CD8-positive, alpha-beta memory T cell (primary cell): ENCODE measurements at regions of chr4 and their contacts with region 1.

Region 1: DNA sequence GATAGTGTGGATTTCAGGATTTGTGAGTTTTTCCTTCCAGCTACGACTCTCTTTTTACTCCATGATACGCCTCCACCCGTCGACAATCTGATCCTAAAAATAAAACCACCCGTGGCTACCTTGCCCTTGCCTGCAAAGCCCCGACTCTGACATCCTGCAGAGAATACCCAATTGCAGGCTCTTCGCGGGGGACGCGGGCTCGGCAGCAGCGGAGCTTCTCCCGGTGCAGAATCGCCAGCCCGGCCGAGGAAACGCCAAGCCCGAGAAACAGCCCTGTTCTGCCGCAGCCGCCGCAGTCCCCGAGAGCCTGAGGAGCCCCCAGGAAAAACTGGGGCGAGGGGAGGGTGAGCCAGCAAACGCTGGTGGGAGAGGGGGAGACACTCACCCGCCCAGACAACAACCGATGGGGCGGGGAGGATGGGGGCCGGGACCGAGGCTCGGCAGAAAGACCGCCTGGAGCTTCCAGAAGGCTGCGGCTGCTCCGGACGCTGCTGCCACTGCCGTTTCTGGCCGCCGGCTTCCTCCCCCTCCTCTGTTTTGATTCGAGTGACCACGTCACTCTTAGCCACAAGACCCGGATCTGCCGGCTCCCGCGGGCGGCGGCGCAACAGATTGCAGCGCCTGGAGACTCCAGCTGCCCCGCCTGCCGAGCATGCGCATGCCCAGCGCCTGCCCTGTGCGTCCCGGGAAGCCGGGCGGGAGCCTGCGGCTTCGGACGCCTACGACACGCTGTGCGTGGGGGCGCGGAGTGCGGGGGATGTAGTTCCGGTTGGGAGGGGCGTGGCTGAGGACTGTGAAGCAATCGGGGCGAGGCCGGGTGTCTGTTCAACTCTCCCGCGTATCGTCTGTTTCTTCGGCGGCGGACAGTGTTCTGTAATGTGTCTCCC is at the start of gene SMIM14:
- DNase-seq: peak; percentile 83 to 91 (median 89)
- H3K4me3 ChIP-seq: peak within 1 kb of the TSS; percentile 86
- H3K4me3 Mint-ChIP-seq: peak within 1 kb of the TSS; percentile 84 to 97 (median 93)
- H3K27ac ChIP-seq: peak within 1 kb of the TSS; percentile 74
- H3K27ac Mint-ChIP-seq: peak within 1 kb of the TSS; percentile 88 to 98 (median 96)
- H3K4me1 ChIP-seq: peaks cover 18% of the 10 kb centered on the region
- H3K4me1 Mint-ChIP-seq: peaks cover 42 to 49% (median 49%) of the 10 kb centered on the region in 3 donors
- H3K27me3 ChIP-seq: no peaks in the 10 kb centered on the region
- H3K27me3 Mint-ChIP-seq: no peaks in the 10 kb centered on the region
- total RNA-seq, gene SMIM14: 2.2 TPM

Region 2: GRCh38 chr4:39469429-39470077 is 169.0 kb before region 1 on chr4:
- CTCF ChIA-PET with region 1: interaction called, 13 read pairs
- POLR2A ChIA-PET with region 1: no interaction called
- DNase-seq: peak in 3 of 5 donors; percentile 11 to 46 (median 44)
- H3K4me3 ChIP-seq: no peak overlapping the region
- H3K4me3 Mint-ChIP-seq: no peak overlapping the region
- H3K27ac ChIP-seq: no peak overlapping the region
- H3K27ac Mint-ChIP-seq: peak overlapping the region in 6 of 8 donors; percentile 10 to 42 (median 16)
- H3K4me1 ChIP-seq: peaks cover 4% of the 10 kb centered on the region
- H3K4me1 Mint-ChIP-seq: peaks cover 0 to 4% (median 1%) of the 10 kb centered on the region in 3 donors
- H3K27me3 ChIP-seq: no peaks in the 10 kb centered on the region
- H3K27me3 Mint-ChIP-seq: no peaks in the 10 kb centered on the region

Region 3: GRCh38 chr4:39527273-39528060 is 111.1 kb before region 1 on chr4 and contains the start of gene UGDH:
- CTCF ChIA-PET with region 1: interaction called, 4 read pairs
- POLR2A ChIA-PET with region 1: interaction called, 16 read pairs
- DNase-seq: peak; percentile 88 to 92 (median 89)
- H3K4me3 ChIP-seq: peak within 1 kb of the TSS; percentile 76
- H3K4me3 Mint-ChIP-seq: peak within 1 kb of the TSS; percentile 96 to 100 (median 99)
- H3K27ac ChIP-seq: peak within 1 kb of the TSS; percentile 72
- H3K27ac Mint-ChIP-seq: peak within 1 kb of the TSS; percentile 50 to 99 (median 97)
- H3K4me1 ChIP-seq: peaks cover 15% of the 10 kb centered on the region
- H3K4me1 Mint-ChIP-seq: peaks cover 21 to 31% (median 25%) of the 10 kb centered on the region in 3 donors
- H3K27me3 ChIP-seq: no peaks in the 10 kb centered on the region
- H3K27me3 Mint-ChIP-seq: no peaks in the 10 kb centered on the region
- total RNA-seq, gene UGDH: 26.9 to 34.9 TPM